ENCODE measurements at regions of chr3 and their contacts with region 1.

Region 1: DNA sequence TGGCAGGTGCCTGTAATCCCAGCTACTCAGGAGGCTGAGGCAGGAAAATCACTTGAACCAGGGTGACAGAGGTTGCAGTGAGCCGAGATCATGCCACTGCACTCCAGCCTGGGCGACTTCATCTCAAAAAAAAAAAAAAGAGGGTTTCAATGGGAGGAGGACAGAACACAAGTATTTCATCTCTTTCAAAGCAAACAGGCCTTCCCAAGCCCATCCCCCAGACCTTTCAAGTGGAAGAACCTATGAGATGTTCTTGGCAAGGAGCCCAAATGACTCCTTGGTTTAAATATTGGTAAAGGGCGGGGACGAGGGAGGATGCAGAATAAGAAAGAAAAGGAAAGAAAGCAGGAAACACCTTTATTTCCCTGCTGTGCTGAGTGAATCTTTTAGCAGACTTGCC is 62.3 kb upstream of the MCF2L2 start:
- DNase-seq: peak; percentile 78
- ATAC-seq: no peak
- H3K4me3 ChIP-seq: no peak overlapping the region
- H3K27ac ChIP-seq: no peak overlapping the region
- H3K4me1 ChIP-seq: peaks cover 10% of the 10 kb centered on the region; the same call in 1 of the 2 replicates
- H3K27me3 ChIP-seq: peaks cover 1 to 9% of the 10 kb centered on the region in 2 experiments; a peak in 1 of 5 replicates
- CTCF ChIP-seq: no peak
- EP300 ChIP-seq: no peak
- POLR2A ChIP-seq: no peak
- RAD21 ChIP-seq: no peak

Region 2: GRCh38 chr3:183629546-183630301 is 139.1 kb after region 1 on chr3:
- CTCF ChIA-PET with region 1: no interaction called
- POLR2A ChIA-PET with region 1: no interaction called
- in situ Hi-C with region 1: no loop called
- intact Hi-C with region 1: loop called (anchors 10 kb)
- DNase-seq: no peak
- ATAC-seq: peak; percentile 46
- H3K4me3 ChIP-seq: no peak overlapping the region
- H3K27ac ChIP-seq: no peak overlapping the region
- H3K4me1 ChIP-seq: peaks cover 26% of the 10 kb centered on the region
- H3K27me3 ChIP-seq: no peaks in the 10 kb centered on the region
- CTCF ChIP-seq: no peak
- EP300 ChIP-seq: no peak
- POLR2A ChIP-seq: no peak
- RAD21 ChIP-seq: no peak

Region 3: DNA sequence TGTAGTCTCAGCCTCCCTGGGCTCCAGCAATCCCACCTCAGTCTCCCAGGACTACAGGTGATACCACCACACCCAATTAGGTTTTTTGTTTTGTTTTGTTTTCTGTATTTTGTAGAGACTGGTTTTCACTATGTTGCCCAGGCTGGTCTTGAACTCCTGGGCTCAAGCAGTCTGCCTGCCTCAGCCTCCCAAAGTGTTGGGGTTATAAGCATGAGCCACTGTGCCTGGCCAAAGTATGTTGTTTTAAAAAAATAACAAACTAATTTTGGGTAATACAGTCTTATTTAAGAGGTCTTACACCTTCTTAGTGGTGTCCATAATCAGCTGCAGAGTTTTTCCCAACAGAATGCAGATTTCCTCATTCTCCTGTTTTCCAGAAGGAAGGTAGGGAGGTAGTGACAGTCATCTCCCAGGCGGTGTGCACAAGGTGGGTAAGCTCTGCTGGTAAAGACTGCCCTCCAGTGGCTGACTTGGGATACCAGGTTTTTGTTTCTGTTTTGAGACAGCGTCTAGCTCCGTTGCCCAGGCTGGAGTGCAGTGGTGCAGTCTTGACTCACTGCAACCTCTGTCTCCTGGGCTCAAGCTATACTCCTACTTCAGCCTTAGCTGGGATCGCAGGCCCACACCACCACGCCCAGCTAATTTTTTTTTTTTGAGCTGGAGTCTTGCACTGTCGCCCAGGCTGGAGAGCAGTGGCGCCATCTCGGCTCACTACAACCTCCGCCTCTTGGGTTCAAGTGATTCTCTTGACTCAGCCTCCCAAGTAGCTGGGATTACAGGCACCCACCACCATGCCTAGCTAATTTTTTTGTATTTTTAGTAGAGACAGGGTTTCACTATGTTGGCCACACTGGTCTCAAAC is 276.3 kb after region 1 on chr3:
- CTCF ChIA-PET with region 1: no interaction called
- POLR2A ChIA-PET with region 1: no interaction called
- in situ Hi-C with region 1: loop called (anchors 10 kb)
- intact Hi-C with region 1: no loop called
- DNase-seq: peak; percentile 67
- ATAC-seq: peak; percentile 98
- H3K4me3 ChIP-seq: no peak overlapping the region
- H3K27ac ChIP-seq: no peak overlapping the region
- H3K4me1 ChIP-seq: no peaks in the 10 kb centered on the region
- H3K27me3 ChIP-seq: no peaks in the 10 kb centered on the region
- CTCF ChIP-seq: peak; percentile 90
- EP300 ChIP-seq: no peak
- POLR2A ChIP-seq: no peak
- RAD21 ChIP-seq: peak; percentile 88